AG04450 (cell line): ENCODE measurements at regions of chr1 and their contacts with region 1.

Region 1: DNA sequence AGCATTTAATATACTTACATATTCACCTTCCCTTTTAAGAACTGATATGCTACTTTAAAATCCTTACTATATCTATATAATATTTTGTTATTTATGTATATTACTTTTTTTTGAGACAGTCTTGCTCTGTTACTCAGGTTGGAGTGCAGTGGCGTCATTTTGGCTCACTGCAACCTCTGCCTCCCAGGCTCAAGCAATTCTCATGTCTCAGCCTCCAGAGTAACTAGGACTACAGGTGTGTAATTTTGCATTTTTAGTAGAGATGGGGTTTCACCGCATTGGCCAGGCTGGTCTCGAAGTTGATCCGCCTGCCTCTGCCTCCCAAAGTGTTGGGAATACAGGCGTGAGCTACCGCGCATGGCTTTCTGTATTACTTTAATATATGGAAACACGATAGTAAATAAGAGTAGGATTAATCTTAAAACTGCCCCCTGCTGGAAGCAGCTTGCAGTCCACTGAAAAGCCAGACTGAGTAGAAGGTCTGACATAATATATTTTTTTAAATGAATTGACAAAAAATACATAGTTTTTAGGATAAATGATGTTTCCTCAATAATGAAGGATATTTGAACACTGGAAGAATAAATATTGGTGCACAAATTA is 24.4 kb downstream of the RCAN3 start:
- DNase-seq: no peak
- H3K4me3 ChIP-seq: no peak overlapping the region
- H3K27ac ChIP-seq: no peak overlapping the region
- H3K27me3 ChIP-seq: no peaks in the 10 kb centered on the region
- CTCF ChIP-seq: peak; percentile 60

Region 2: GRCh38 chr1:24514946-24515345 is 12.1 kb before region 1 on chr1:
- CTCF ChIA-PET with region 1: interaction called, 10 read pairs
- POLR2A ChIA-PET with region 1: no interaction called
- DNase-seq: no peak
- H3K4me3 ChIP-seq: no peak overlapping the region
- H3K27ac ChIP-seq: no peak overlapping the region
- H3K27me3 ChIP-seq: no peaks in the 10 kb centered on the region
- CTCF ChIP-seq: no peak

Region 3: DNA sequence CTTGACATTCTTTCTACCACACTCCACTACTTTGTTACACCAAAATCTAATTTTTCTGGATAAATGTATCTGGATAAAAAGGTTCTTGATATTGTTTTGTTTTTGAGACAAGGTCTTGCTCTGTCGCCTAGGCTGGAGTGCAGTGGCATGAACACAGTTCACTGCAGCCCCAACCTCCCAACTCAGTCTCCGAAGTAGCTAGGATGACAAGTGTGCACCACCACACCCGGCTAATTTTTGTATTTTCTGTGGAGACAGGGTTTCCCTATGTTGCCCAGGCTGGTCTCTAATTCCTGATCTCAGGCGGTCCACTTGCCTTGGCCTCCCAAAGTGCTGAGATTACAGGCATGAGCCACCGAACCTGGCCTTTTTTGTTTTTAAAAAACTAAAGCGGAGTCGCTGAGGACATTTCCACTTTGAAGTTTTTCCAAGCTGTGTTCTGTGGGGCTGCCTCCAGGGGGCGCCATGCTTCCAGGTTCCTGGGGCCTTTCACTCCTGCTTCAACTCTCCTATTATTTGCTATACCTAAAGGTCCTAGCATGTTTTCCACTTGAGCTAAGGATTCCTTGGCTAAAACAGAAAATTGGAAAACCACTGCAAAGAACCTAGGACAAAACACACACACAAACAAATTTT is 14.8 kb after region 1 on chr1:
- CTCF ChIA-PET with region 1: interaction called, 20 read pairs
- POLR2A ChIA-PET with region 1: no interaction called
- DNase-seq: no peak
- H3K4me3 ChIP-seq: no peak overlapping the region
- H3K27ac ChIP-seq: no peak overlapping the region
- H3K27me3 ChIP-seq: peaks cover 4% of the 10 kb centered on the region
- CTCF ChIP-seq: peak; percentile 56

Region 4: GRCh38 chr1:24622218-24622617 is 95.2 kb after region 1 on chr1:
- CTCF ChIA-PET with region 1: no interaction called
- POLR2A ChIA-PET with region 1: no interaction called
- DNase-seq: no peak
- H3K4me3 ChIP-seq: no peak overlapping the region
- H3K27ac ChIP-seq: no peak overlapping the region
- H3K27me3 ChIP-seq: peaks cover 13% of the 10 kb centered on the region
- CTCF ChIP-seq: no peak

Region 5: DNA sequence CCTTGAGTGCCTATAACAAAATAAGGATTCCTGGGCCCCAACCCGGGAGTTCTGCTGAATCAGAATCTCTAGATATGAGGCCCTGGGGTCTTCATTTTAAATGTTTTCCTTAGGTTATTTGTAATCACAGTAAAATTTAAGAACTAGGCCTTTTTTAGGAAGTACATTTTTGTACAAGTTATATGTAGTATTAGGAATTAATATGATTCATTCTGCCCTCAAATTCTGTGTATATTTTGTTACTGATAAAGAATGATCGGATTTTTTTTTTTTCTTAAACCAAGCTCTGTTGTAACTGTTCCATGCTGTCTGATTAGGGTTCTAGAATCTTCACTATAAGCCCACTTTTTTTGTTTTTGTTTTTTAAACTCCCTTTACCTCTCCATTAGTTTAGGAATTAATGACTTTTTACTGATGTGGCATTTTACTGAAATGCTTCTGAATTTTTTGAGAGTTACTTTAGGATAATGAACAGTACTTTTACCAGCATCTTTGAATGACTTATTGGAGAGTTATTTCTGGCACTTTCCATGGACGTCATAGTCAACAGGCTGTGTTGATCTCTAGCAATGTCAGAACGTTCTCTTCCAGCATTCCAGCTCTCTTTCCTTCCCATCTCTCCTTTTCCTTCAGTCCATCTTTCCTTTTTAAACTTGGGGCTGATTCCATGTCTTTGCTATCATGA is 266.5 kb after region 1 on chr1:
- CTCF ChIA-PET with region 1: no interaction called
- POLR2A ChIA-PET with region 1: no interaction called
- DNase-seq: peak; percentile 70
- H3K4me3 ChIP-seq: no peak overlapping the region
- H3K27ac ChIP-seq: peak overlapping the region; percentile 89
- H3K27me3 ChIP-seq: no peaks in the 10 kb centered on the region
- CTCF ChIP-seq: no peak